ENCODE measurements at regions of chr18 and their contacts with region 1.

Region 1: DNA sequence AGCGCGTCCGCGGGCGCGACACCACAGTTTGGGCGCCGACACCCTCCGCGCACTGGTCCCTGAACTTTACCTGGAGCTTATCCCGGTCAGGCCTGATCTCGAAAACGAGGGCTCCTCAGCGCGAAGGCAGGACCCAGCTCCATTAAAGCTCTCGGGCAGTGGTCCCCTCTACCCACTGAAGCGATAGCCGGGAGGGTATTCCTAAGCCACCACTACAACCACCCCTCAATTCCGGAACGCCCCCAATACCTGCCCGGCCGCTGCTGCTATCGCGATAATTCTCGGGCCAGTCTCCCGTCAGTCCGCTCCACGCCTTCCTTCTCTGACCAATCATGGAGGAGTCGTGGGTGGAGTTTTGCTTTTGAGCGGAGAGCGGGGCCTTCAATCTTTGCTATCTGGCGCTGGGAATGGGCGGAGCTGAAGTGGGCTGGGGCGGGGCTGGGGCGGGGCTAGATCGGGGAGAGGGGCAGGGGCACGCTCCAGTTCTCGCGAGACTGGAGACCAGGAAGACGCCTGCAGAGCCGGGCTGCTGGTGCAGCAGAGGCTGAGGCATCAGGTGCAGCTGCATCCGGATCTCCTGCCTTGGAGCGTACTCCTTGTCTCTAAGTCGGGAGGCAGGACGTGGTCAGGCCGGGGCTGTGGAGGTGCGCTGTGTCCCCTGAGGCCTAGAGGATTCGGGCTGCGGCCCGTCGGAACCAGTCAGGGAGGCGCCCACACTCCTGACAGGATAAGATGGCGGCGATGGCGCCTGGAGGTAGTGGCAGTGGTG is at the starts of genes PIGN and RELCH:
- DNase-seq: peak; percentile 95 to 99 (median 97)
- H3K4me3 ChIP-seq: peak within 1 kb of the TSS; percentile 76 to 100
- H3K4me3 Mint-ChIP-seq: peak within 1 kb of the TSS; percentile 94 to 99 (median 99)
- H3K27ac ChIP-seq: peak within 1 kb of the TSS; percentile 79
- H3K27ac Mint-ChIP-seq: peak within 1 kb of the TSS; percentile 95 to 97 (median 96)
- H3K4me1 ChIP-seq: peaks cover 56% of the 10 kb centered on the region
- H3K4me1 Mint-ChIP-seq: peaks cover 41 to 73% (median 57%) of the 10 kb centered on the region in 4 donors
- H3K27me3 ChIP-seq: no peaks in the 10 kb centered on the region
- H3K27me3 Mint-ChIP-seq: no peaks in the 10 kb centered on the region
- total RNA-seq, gene PIGN: 27.7 to 31.0 TPM
- total RNA-seq, gene RELCH: 57.2 to 59.4 TPM

Region 2: GRCh38 chr18:61710082-61710620 is 476.8 kb before region 1 on chr18:
- CTCF ChIA-PET with region 1: no interaction called
- POLR2A ChIA-PET with region 1: no interaction called
- intact Hi-C with region 1: no loop called
- DNase-seq: no peak
- H3K4me3 ChIP-seq: no peak overlapping the region
- H3K4me3 Mint-ChIP-seq: no peak overlapping the region
- H3K27ac ChIP-seq: no peak overlapping the region
- H3K27ac Mint-ChIP-seq: no peak overlapping the region
- H3K4me1 ChIP-seq: no peaks in the 10 kb centered on the region
- H3K4me1 Mint-ChIP-seq: no peaks in the 10 kb centered on the region
- H3K27me3 ChIP-seq: no peaks in the 10 kb centered on the region
- H3K27me3 Mint-ChIP-seq: peaks cover 5% of the 10 kb centered on the region in 2 donors

Region 3: DNA sequence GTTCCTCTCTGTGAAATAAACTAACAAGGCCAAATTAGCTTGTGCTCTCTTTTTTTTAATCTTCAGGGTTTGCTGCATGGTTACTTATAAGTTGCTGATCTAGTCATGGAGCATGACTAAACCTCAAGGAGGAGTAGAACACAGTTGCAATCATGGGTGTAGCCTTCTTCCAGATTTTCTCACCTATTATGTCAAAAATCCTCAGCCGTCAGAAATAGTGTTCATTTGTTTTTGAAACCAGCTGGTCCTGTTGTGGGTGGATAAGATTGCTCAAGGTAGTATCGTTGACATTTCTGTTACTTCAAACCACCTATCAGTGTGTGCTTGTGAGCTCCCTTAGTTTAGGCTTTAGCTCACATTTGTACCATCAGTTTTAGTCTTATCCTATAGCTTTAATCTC is 11.3 kb after region 1 on chr18:
- CTCF ChIA-PET with region 1: interaction called, 7 read pairs
- POLR2A ChIA-PET with region 1: interaction called, 21 read pairs
- intact Hi-C with region 1: no loop called
- DNase-seq: no peak
- H3K4me3 ChIP-seq: no peak overlapping the region
- H3K4me3 Mint-ChIP-seq: peak overlapping the region in 3 of 8 donors; percentile 13 to 58 (median 40)
- H3K27ac ChIP-seq: no peak overlapping the region
- H3K27ac Mint-ChIP-seq: peak overlapping the region in 6 of 7 donors; percentile 12 to 64 (median 34)
- H3K4me1 ChIP-seq: peaks cover 59% of the 10 kb centered on the region
- H3K4me1 Mint-ChIP-seq: peaks cover 45 to 69% (median 57%) of the 10 kb centered on the region in 4 donors
- H3K27me3 ChIP-seq: no peaks in the 10 kb centered on the region
- H3K27me3 Mint-ChIP-seq: no peaks in the 10 kb centered on the region

Region 4: DNA sequence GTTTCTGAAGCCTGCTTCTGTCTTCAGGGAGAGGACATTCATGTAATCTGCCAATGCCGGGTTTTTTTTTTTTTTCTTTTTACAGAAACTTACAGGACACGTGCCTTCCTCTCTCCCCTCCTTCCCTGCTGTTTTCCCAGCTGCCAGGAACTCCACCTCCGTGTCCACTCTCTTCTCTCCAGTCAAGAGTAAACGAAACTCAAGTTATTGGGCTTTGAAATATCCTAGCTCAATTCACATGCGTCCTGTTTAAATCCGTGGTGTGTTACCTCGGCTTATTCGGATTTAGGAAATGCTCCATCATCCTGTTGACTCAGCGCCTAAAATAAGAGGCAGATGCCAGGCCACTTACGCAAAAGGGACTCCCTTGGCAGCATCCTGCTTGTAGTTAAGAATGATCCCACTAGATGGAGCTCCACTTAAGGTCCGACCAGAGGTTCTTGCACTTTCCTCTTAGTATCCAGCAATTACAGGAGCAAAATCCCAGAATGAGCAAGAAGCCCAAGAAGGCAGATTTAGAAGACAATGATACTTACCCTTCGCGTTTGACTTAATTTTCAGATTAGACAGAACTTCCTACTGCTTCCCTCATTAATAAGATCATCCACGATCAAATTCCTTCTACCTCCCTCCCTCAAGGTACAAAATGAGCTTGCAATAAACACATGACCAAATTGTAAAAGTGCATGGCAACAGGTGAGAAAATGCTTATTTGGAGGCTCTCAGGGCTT is 238.7 kb after region 1 on chr18:
- CTCF ChIA-PET with region 1: interaction called, 7 read pairs
- POLR2A ChIA-PET with region 1: interaction called, 8 read pairs
- intact Hi-C with region 1: loop called (anchors 1 kb)
- DNase-seq: peak; percentile 50 to 63 (median 61)
- H3K4me3 ChIP-seq: no peak overlapping the region
- H3K4me3 Mint-ChIP-seq: peak overlapping the region in 1 of 8 donors; percentile 18
- H3K27ac ChIP-seq: no peak overlapping the region
- H3K27ac Mint-ChIP-seq: peak overlapping the region in 4 of 7 donors; percentile 19 to 66 (median 52)
- H3K4me1 ChIP-seq: peaks cover 8% of the 10 kb centered on the region
- H3K4me1 Mint-ChIP-seq: peaks cover 13 to 16% (median 16%) of the 10 kb centered on the region in 4 donors
- H3K27me3 ChIP-seq: no peaks in the 10 kb centered on the region
- H3K27me3 Mint-ChIP-seq: peaks cover 0 to 3% of the 10 kb centered on the region in 2 donors

Region 5: GRCh38 chr18:62584241-62585120 is 397.5 kb after region 1 on chr18:
- CTCF ChIA-PET with region 1: no interaction called
- POLR2A ChIA-PET with region 1: no interaction called
- intact Hi-C with region 1: loop called (anchors 1 kb)
- DNase-seq: peak; percentile 81 to 88 (median 83)
- H3K4me3 ChIP-seq: no peak overlapping the region
- H3K4me3 Mint-ChIP-seq: peak overlapping the region; percentile 1 to 73 (median 36)
- H3K27ac ChIP-seq: no peak overlapping the region
- H3K27ac Mint-ChIP-seq: peak overlapping the region; percentile 33 to 93 (median 48)
- H3K4me1 ChIP-seq: peaks cover 27% of the 10 kb centered on the region
- H3K4me1 Mint-ChIP-seq: peaks cover 20 to 38% (median 31%) of the 10 kb centered on the region in 4 donors
- H3K27me3 ChIP-seq: no peaks in the 10 kb centered on the region
- H3K27me3 Mint-ChIP-seq: no peaks in the 10 kb centered on the region

Region 6: DNA sequence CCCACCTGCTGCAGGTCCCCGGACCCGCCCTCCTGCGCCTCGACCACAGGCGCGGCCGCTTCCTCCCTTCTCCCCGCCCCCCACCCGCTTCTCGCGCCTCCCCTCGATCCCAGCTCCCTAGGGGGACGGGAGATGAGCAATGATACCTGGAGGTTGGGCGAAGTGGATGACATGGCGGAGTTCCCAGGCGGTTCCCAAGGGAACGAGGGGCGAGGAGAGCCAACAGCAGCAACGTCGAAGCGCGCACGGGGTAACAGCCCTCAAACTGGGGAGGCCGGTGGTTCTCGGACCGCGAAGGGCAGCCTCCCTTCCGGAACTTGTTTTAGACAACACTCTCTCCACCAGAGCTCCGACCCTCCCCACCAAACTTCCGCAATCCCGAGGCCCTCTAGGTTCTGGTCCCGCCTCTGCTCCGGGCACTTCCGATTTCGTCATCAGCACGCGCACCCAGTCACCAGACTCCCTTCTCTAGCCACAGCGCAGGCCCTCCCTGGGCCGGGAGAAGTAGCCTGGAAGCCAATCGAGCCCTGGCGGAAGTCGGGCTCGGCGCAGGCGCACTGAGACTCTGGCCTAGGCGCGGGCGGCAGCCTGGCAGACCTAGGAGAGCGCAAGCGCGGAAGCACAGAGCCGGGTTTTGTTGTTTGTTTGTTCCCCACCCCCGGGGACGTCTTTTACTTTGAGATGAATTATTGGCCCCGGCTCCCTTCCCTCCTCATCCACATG is 1235.3 kb after region 1 on chr18 and contains the start of gene VPS4B:
- CTCF ChIA-PET with region 1: no interaction called
- POLR2A ChIA-PET with region 1: no interaction called
- intact Hi-C with region 1: loop called (anchors 5 kb)
- DNase-seq: peak; percentile 99 to 100 (median 100)
- H3K4me3 ChIP-seq: peak within 1 kb of the TSS; percentile 73 to 98
- H3K4me3 Mint-ChIP-seq: peak within 1 kb of the TSS; percentile 94 to 100 (median 96)
- H3K27ac ChIP-seq: peak within 1 kb of the TSS; percentile 98
- H3K27ac Mint-ChIP-seq: peak within 1 kb of the TSS; percentile 94 to 99 (median 97)
- H3K4me1 ChIP-seq: peaks cover 55% of the 10 kb centered on the region
- H3K4me1 Mint-ChIP-seq: peaks cover 19 to 29% (median 21%) of the 10 kb centered on the region in 4 donors
- H3K27me3 ChIP-seq: no peaks in the 10 kb centered on the region
- H3K27me3 Mint-ChIP-seq: peaks cover 3 to 5% of the 10 kb centered on the region in 2 donors
- total RNA-seq, gene VPS4B: 93.0 to 94.9 TPM

Measured in CD4-positive, alpha-beta memory T cell (primary cell).